ENCODE measurements at regions of chr12 and their contacts with region 1.

Region 1: DNA sequence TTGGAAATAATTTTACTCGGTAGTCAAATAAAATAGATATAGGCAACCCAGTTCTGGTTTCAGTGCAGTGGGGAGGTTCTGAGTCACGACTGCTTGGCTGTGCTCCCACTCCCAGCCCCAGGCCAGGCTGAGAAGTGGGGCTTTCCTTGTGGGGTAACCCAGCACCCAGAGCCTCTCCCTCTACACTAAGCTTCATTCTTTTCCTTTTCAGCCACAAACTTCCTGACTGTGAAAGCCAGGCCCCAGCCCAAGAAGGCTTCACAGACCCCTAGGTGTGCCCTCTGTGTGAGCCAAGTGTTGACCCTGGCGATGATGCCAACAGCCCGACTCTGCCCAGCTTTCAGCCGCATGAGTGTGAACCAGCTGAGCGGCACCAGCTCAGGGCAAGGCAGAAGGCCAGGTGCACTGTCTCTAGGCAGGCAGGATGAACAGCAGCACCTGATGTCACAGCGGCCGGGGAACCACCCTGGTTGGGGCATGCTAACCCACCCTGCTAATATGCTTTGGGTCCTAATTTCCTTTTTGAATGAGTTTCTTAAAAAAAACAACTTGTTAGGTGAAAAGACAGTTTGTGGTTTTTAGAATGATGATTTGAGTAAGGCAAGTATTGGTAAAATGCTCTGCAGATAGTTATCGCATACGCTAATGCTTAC is 42.2 kb upstream of the ATP23 start:
- DNase-seq: peak; percentile 58 to 71 (median 67)
- H3K4me3 ChIP-seq: no peak overlapping the region
- H3K27ac ChIP-seq: peak overlapping the region; percentile 7 to 100
- H3K4me1 ChIP-seq: peaks cover 29% of the 10 kb centered on the region
- H3K27me3 ChIP-seq: no peaks in the 10 kb centered on the region
- CTCF ChIP-seq: no peak
- EP300 ChIP-seq: no peak
- POLR2A ChIP-seq: no peak

Region 2: DNA sequence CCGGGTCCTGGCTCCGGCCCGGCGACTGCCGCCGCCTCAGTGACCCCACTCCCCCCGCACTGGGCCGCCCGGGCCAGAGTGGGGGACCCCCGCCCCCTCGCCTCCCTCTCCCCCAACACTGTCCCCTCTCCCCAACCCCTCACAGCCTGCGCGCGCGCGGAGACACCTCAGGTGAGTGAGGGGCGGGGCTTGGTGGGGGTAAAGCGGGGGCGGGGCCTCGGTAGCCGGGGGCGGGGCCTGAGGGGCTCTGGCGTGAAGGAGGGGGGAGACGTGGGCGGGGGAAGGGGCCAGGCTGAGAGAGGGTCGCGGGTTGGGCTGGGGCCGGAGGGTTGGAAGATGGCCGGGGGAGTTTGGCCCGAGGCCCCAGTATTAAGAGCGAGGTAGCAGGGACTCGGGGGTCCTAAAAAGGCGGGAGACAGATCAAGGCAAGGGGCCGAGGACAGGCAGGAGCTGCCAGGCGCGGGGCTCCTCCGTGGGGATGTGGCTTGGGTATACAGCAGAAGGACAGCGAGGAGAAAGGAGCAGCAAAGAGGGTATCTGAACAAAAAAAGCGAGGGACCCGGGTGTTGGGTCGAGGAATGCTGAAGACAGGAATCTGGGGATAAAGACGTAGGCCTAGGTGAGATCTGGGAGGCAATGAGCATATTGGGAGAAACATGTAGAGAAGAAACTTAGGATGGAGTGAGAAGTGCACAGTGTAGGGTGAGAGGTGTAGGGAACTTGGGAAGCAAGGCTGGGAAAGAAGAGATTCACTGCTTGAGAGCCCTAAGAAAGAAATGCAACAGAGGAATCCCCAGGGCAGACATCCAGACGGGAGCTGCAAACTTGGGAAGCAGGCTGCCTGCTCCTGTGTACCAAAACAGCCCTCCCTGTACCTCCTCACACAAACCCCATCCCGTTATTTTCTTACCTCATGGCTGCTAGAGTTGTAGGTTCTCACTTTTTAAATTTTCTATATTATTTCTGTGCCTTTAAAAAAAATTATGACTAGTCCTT is 1891.3 kb before region 1 on chr12:
- intact Hi-C with region 1: no loop called
- DNase-seq: peak; percentile 71 to 82 (median 77)
- H3K4me3 ChIP-seq: peak overlapping the region; percentile 75
- H3K27ac ChIP-seq: peak overlapping the region; percentile 93 to 98
- H3K4me1 ChIP-seq: no peaks in the 10 kb centered on the region
- H3K27me3 ChIP-seq: no peaks in the 10 kb centered on the region
- CTCF ChIP-seq: no peak
- EP300 ChIP-seq: no peak
- POLR2A ChIP-seq: no peak

Region 3: DNA sequence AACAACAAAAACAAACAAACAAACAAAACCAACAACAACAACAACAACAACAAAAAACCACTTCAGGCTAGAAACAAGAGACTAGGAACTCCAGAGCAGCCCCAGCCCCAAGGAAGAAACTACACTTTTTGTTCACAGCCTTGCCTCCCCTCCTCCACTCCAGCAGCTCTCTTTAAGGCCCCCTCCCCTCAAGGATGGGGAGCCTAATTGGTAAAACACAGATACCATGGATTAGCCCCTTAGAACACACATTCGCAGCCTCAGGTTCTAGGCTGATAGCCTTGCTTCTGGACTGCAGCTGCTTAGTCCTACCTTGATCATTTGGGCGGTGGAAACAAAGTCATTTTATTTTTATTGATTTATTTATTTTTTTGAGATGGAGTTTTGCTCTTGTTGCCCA is 68.7 kb before region 1 on chr12:
- intact Hi-C with region 1: loop called in 3 of 4 experiments (anchors 2 to 5 kb)
- DNase-seq: no peak
- H3K4me3 ChIP-seq: no peak overlapping the region
- H3K27ac ChIP-seq: no peak overlapping the region
- H3K4me1 ChIP-seq: peaks cover 39% of the 10 kb centered on the region
- H3K27me3 ChIP-seq: no peaks in the 10 kb centered on the region
- CTCF ChIP-seq: no peak
- EP300 ChIP-seq: no peak
- POLR2A ChIP-seq: no peak

Region 4: GRCh38 chr12:57836442-57837375 is 62.4 kb before region 1 on chr12:
- intact Hi-C with region 1: loop called (anchors 2 to 5 kb)
- DNase-seq: peak; percentile 88 to 93 (median 92)
- H3K4me3 ChIP-seq: peak overlapping the region; percentile 25
- H3K27ac ChIP-seq: peak overlapping the region in 1 of 2 donors; percentile 58
- H3K4me1 ChIP-seq: peaks cover 67% of the 10 kb centered on the region
- H3K27me3 ChIP-seq: no peaks in the 10 kb centered on the region
- CTCF ChIP-seq: no peak
- EP300 ChIP-seq: no peak
- POLR2A ChIP-seq: no peak

Region 5: GRCh38 chr12:57846577-57847319 is 52.4 kb before region 1 on chr12 and contains the start of gene CTDSP2:
- intact Hi-C with region 1: loop called (anchors 2 to 5 kb)
- DNase-seq: peak; percentile 99 to 100 (median 100)
- H3K4me3 ChIP-seq: peak within 1 kb of the TSS; percentile 85
- H3K27ac ChIP-seq: peak within 1 kb of the TSS; percentile 98 to 99
- H3K4me1 ChIP-seq: peaks cover 5% of the 10 kb centered on the region
- H3K27me3 ChIP-seq: no peaks in the 10 kb centered on the region
- CTCF ChIP-seq: no peak
- EP300 ChIP-seq: no peak
- POLR2A ChIP-seq: peak; percentile 73
- total RNA-seq, gene CTDSP2: 73.1 to 212 (median 189) TPM

Region 6: DNA sequence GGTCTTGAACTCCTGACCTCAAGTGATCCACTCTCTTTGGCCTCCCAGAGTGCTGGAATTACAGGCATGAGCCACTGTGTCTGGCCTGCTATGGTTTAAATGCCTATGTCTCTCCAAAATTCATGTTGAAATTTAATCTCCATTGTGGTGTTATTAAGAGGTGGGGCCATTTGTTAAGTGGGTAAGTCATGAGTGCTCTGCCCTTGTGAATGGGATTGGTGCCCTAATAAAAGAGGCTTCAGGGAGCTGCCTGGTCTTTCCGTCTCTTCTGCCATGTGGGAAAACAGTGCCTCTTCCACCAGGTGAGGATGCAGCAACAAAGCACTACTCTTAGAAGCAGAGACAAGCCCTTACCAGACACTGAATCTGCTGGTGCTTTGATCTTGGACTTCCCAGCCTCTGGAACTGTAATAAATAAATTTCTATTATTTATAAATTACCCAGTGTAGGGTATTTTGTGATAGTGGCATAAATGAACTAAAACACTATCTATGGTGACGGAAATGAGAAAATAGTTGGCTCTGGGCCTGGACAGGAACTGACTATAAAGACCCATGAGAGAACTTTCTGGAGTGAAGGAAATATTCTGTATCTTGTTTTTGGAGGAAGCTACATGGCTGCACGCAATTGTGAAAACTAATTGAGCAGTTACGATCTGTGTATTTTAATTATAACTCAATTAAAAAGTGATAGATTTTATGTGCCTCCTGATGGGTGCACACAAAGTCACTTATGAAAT is 30.1 kb after region 1 on chr12:
- intact Hi-C with region 1: no loop called
- DNase-seq: no peak
- H3K4me3 ChIP-seq: no peak overlapping the region
- H3K27ac ChIP-seq: no peak overlapping the region
- H3K4me1 ChIP-seq: no peaks in the 10 kb centered on the region
- H3K27me3 ChIP-seq: no peaks in the 10 kb centered on the region
- CTCF ChIP-seq: no peak
- EP300 ChIP-seq: no peak
- POLR2A ChIP-seq: no peak